Vagina (tissue), 2 donors: ENCODE measurements at regions of chr11 and their contacts with region 1.

Region 1: GRCh38 chr11:134124660-134125451 is 56.0 kb downstream of the JAM3 start:
- DNase-seq: no peak
- H3K4me3 ChIP-seq: peak overlapping the region; percentile 34 to 52
- H3K27ac ChIP-seq: peak overlapping the region; percentile 64
- H3K4me1 ChIP-seq: peaks cover 44% of the 10 kb centered on the region
- H3K27me3 ChIP-seq: no peaks in the 10 kb centered on the region
- CTCF ChIP-seq: no peak
- POLR2A ChIP-seq: no peak

Region 2: GRCh38 chr11:133956650-133957633 is 167.9 kb before region 1 on chr11 and contains the start of gene IGSF9B:
- intact Hi-C with region 1: loop called (anchors 10 kb)
- DNase-seq: peak in 1 of 2 donors; percentile 92
- H3K4me3 ChIP-seq: peak within 1 kb of the TSS; percentile 54 to 81
- H3K27ac ChIP-seq: peak within 1 kb of the TSS; percentile 59
- H3K4me1 ChIP-seq: peaks cover 42% of the 10 kb centered on the region
- H3K27me3 ChIP-seq: no peaks in the 10 kb centered on the region
- CTCF ChIP-seq: no peak
- POLR2A ChIP-seq: peak in 1 of 2 donors; percentile 27
- total RNA-seq, gene IGSF9B: 10.1 TPM

Region 3: GRCh38 chr11:134068829-134069425 is 55.9 kb before region 1 on chr11 and contains the start of gene JAM3:
- intact Hi-C with region 1: loop called (anchors 2 kb)
- DNase-seq: no peak
- H3K4me3 ChIP-seq: peak within 1 kb of the TSS; percentile 75 to 85
- H3K27ac ChIP-seq: peak within 1 kb of the TSS; percentile 97
- H3K4me1 ChIP-seq: peaks cover 22% of the 10 kb centered on the region
- H3K27me3 ChIP-seq: no peaks in the 10 kb centered on the region
- CTCF ChIP-seq: no peak
- POLR2A ChIP-seq: peak in 1 of 2 donors; percentile 72
- total RNA-seq, gene JAM3: 31.7 TPM